Posterior cingulate gyrus (tissue), 11 donors: ENCODE measurements at regions of chr11 and their contacts with region 1.

Region 1: DNA sequence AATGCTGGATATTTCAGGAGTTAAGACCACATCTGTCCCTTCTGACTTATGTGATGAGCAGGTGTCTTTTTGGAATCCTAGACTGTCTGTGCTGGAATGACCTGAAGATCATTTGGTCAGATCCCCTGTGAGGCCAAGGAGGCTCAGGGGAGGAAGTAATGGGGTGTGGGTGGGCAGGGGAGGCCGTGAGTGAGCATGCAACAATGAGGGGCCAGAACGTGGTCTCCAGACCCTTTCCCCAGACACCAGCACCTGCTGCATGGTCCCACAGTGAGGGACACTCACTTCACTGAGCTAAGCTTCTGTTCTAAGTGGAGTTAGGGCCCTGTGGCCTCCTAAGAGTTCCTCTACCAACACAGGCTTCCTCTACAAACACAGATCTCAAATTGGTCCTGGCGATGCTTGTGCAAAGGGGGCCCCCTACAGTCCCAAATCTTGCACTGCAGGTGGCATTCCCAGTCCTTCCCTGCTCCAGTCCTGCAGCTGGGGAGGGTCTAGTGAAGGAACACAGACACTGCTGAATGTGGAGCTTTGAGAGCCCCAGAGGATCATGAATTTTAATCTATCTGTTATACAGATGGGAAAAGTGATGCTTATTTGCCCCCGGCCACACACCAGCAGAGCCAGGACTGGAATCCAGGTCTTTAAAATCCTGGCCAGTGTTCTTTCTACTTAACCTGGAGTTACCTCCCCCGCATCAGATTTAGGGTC is 7.4 kb downstream of the USP2 start:
- DNase-seq: peak in 9 of 10 donors; percentile 83 to 98 (median 90)

Region 2: GRCh38 chr11:119306373-119306890 is 67.6 kb before region 1 on chr11:
- intact Hi-C with region 1: no loop called
- DNase-seq: no peak

Region 3: DNA sequence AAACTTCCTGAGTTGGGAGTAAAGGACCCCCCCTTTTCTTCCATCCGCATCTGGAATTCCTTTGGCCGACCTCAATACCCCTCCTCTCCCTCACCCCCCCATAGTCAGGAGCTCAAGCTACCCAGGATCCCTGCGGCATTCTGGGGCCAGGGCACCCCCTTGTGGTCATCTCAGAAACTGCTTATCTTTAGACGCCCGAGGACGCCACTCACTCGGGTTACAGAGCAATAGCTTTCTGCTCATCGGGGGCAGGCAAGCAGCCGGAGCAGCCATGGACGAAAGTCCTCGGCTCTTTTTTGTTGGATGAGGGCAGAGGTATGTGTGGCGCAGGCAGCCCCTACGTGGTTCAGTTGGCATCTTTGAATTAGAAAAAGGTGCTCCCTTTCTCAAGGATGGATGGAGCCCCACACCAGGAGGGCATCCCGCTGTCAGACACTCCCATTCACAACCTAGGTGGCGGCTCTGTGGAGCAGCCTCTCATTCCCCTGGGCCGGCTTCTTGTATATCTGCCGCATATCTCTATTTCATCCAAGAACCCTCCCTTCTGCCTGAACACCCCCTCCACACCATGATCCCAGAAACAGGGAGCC is 35.7 kb before region 1 on chr11:
- intact Hi-C with region 1: loop called (anchors 5 kb)
- DNase-seq: peak in 7 of 10 donors; percentile 78 to 97 (median 83)

Region 4: DNA sequence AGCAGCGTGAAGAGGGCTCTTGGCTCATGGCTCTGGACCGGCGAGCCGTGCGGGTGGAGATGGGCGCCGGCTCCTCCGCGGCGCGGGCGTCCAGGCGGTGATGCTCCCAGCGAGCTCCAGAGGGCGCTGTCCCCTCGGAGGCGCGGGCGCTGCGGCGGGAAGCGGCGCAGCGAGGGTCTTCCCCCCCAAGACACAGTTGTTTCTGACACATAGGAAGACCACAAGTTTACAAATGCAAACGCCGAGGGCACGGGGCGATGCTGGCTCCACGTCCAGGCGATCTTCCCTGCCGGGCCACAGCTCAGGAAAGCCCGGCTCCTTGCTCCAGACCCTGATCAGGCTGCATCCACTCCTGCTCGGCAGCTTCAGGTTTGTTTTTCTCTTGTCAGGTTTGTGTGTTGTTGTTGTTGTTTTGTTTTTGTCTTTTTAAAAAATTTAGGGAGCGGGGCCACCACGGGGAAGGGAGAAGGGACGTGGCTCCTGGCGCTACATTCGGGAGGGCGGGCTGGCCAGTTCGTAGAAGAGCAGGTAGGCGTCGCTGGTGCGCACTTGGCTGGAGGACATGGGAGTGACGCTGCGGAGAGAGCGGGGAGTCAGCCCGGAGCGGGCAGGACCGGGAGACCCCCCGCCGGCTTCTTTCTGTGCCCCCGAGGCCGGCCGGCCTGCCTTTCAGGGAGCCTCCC is 17.6 kb before region 1 on chr11:
- intact Hi-C with region 1: loop called (anchors 1 kb)
- DNase-seq: peak in 8 of 10 donors; percentile 70 to 96 (median 79)